HEK293 (cell line): ENCODE measurements at regions of chr13 and their contacts with region 1.

Region 1: GRCh38 chr13:99916366-99917103 is 55.0 kb downstream of the ZIC5 start:
- H3K4me3 ChIP-seq: no peak overlapping the region
- H3K27ac ChIP-seq: no peak overlapping the region
- H3K4me1 ChIP-seq: no peaks in the 10 kb centered on the region
- CTCF ChIP-seq: no peak; the same call in 1 of the 2 replicates

Region 2: DNA sequence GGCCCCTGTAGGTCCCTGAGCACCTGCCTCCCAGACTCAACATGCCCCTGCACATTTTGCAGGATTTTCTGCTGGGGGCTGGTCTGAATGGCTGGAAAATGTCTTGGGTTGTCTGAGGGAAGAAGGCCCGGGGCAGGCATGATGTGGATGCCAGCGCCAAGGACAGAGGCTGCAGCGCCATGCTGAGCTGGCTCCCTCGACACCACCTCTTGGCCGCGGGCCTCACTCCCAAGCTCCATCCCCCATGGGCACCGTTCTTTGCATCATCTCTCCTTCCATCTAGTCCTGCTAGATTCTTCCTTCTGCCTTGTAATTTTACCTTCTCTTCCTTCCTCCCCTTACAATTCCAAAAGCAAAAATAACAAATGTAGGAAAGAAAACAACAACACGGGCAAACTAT is 15.6 kb before region 1 on chr13:
- CTCF ChIA-PET with region 1: interaction called, 12 read pairs
- POLR2A ChIA-PET with region 1: no interaction called
- H3K4me3 ChIP-seq: no peak overlapping the region
- H3K27ac ChIP-seq: no peak overlapping the region
- H3K4me1 ChIP-seq: 0 out of 2 replicates have a peak, but pooled peaks cover 2% of the 10 kb centered on the region
- CTCF ChIP-seq: no peak

Region 3: DNA sequence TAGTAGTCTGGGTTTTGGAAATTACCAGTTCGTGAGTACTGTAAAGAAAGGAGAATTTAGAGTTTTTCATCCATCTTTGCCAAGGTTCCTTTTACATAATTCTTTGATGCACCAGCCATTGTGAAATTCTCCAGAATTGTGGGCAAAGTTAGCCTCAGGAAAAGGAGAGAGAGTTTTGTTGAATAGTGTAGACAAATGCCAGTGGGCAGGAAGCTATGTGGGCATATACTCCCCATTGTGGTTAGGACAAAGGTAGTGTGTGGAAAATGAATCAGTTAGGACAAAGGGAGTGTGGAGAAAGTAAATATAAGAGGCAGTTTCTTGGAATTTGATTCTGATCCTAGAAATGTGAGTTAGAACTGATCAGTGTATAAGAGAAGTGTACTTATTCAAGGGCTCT is 240.3 kb after region 1 on chr13:
- CTCF ChIA-PET with region 1: interaction called, 10 read pairs
- POLR2A ChIA-PET with region 1: no interaction called
- H3K4me3 ChIP-seq: no peak overlapping the region
- H3K27ac ChIP-seq: no peak overlapping the region
- H3K4me1 ChIP-seq: no peaks in the 10 kb centered on the region
- CTCF ChIP-seq: no peak

Region 4: GRCh38 chr13:100235311-100235901 is 318.9 kb after region 1 on chr13:
- CTCF ChIA-PET with region 1: interaction called, 11 read pairs
- POLR2A ChIA-PET with region 1: no interaction called
- H3K4me3 ChIP-seq: no peak overlapping the region
- H3K27ac ChIP-seq: no peak overlapping the region
- H3K4me1 ChIP-seq: peaks cover 8% of the 10 kb centered on the region; the same call in 1 of the 2 replicates
- CTCF ChIP-seq: no peak

Region 5: DNA sequence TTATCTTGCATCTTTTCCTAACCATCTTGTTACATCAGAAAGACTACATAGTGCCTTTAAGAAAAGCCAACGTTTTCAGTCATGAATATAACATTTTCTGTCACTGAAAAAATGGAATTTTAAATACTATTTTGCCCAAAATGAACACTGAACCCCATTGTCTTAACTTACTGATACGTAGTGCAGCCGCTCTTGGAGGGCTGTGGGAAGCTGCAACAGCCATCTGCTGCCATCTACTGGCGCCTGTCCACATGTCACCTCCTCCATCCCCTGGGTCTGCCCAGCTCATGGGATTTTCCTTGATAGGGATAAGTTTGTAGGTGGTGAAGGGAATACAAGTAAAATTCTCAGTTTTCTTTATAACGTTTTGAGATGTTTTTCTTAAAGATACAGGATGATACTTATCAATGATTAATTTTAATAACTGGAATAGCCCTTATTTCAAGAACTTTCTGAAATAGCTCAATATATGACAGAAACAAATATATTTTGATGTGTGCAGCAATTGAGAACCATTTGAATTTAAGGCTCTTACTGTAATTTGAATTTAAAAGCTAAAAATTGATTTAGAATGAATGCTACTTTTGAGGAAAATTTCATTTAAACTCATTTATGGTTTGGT is 598.4 kb after region 1 on chr13:
- CTCF ChIA-PET with region 1: interaction called, 19 read pairs
- POLR2A ChIA-PET with region 1: no interaction called
- H3K4me3 ChIP-seq: no peak overlapping the region
- H3K27ac ChIP-seq: no peak overlapping the region
- H3K4me1 ChIP-seq: no peaks in the 10 kb centered on the region
- CTCF ChIP-seq: no peak